ENCODE measurements at regions of chr1 and their contacts with region 1.

Region 1: GRCh38 chr1:172429331-172430127 is 9.0 kb downstream of the C1orf105 start:
- DNase-seq: peak; percentile 56
- H3K4me3 Mint-ChIP-seq: no peak overlapping the region
- H3K27ac Mint-ChIP-seq: no peak overlapping the region
- H3K4me1 Mint-ChIP-seq: peaks cover 15% of the 10 kb centered on the region
- H3K27me3 Mint-ChIP-seq: no peaks in the 10 kb centered on the region
- CTCF ChIP-seq: peak; percentile 78

Region 2: GRCh38 chr1:171801487-171801891 is 628.0 kb before region 1 on chr1:
- CTCF ChIA-PET with region 1: no interaction called
- intact Hi-C with region 1: loop called (anchors 10 kb)
- DNase-seq: peak; percentile 40
- H3K4me3 Mint-ChIP-seq: no peak overlapping the region
- H3K27ac Mint-ChIP-seq: no peak overlapping the region
- H3K4me1 Mint-ChIP-seq: peaks cover 8% of the 10 kb centered on the region
- H3K27me3 Mint-ChIP-seq: no peaks in the 10 kb centered on the region
- CTCF ChIP-seq: peak; percentile 74

Region 3: GRCh38 chr1:172089768-172090510 is 339.6 kb before region 1 on chr1:
- CTCF ChIA-PET with region 1: no interaction called
- intact Hi-C with region 1: loop called (anchors 1 kb)
- DNase-seq: peak; percentile 83
- H3K4me3 Mint-ChIP-seq: no peak overlapping the region
- H3K27ac Mint-ChIP-seq: no peak overlapping the region
- H3K4me1 Mint-ChIP-seq: peaks cover 11% of the 10 kb centered on the region
- H3K27me3 Mint-ChIP-seq: no peaks in the 10 kb centered on the region
- CTCF ChIP-seq: peak; percentile 86

Region 4: DNA sequence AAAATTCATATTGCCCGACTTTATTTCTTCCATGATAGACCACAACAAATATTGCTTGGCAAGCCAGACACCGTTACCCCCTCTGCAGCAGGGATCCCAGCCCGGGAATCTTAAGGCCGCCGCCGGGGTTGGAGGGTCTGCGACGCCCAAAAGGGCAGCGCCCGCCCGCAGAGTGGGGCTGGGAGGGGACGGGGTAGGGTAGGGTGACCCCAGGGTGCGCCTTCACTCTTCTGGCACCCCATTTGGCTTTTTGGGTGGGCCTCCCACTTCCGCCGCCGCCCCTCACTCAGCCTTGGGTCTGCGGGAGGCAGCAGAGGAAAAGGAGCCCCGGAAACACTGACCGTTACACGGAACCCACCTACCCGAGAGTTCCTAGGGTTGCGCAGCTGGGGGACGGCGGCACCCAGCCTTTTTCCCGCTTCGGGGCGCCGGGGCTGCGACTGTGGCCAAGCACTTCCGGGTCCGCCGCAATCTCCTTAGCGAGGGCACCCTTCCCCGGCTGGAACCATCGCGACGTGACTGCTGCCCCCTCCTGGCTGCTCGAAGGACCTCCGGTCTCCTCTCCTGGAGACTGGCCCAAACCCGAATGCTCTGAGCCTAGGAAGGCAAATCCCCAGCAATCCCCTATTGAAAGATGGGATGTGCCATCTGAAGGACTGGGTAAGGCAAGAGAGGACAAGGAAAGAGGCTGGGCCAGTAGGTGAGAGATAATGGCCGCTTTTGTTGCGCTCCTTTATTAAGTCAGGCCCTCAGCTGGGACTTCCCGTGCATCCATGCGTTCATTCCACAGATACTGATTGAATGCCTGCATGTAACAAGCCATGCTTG is 14.3 kb after region 1 on chr1 and contains the start of gene PIGC:
- CTCF ChIA-PET with region 1: interaction called, 8 read pairs
- intact Hi-C with region 1: loop called (anchors 2 kb)
- DNase-seq: peak; percentile 97
- H3K4me3 Mint-ChIP-seq: peak within 1 kb of the TSS; percentile 87
- H3K27ac Mint-ChIP-seq: peak within 1 kb of the TSS; percentile 79
- H3K4me1 Mint-ChIP-seq: peaks cover 40% of the 10 kb centered on the region
- H3K27me3 Mint-ChIP-seq: no peaks in the 10 kb centered on the region
- CTCF ChIP-seq: peak; percentile 90
- total RNA-seq, gene PIGC: 29.2 TPM in 2 replicates

Region 5: DNA sequence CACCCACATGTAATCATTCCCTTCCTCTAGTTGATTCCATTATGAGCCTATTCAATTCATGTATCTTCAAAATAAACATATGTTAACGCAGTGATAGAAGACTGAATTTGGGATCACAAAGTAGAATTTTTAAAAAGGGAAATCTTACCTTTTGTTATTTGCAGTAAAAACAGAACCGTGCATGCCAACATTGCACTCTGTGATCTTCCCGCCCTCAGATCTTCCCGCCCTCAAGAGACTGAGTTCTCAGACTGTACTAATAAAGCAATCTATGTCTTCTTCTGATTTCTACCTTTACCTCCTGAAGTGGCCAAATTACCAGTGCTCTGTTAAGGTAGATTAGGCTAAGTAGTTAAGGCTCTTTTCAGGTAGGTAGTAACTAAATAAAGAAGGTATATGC is 99.8 kb after region 1 on chr1:
- CTCF ChIA-PET with region 1: no interaction called
- intact Hi-C with region 1: no loop called
- DNase-seq: no peak
- H3K4me3 Mint-ChIP-seq: no peak overlapping the region
- H3K27ac Mint-ChIP-seq: no peak overlapping the region
- H3K4me1 Mint-ChIP-seq: peaks cover 11% of the 10 kb centered on the region
- H3K27me3 Mint-ChIP-seq: no peaks in the 10 kb centered on the region
- CTCF ChIP-seq: no peak

Region 6: DNA sequence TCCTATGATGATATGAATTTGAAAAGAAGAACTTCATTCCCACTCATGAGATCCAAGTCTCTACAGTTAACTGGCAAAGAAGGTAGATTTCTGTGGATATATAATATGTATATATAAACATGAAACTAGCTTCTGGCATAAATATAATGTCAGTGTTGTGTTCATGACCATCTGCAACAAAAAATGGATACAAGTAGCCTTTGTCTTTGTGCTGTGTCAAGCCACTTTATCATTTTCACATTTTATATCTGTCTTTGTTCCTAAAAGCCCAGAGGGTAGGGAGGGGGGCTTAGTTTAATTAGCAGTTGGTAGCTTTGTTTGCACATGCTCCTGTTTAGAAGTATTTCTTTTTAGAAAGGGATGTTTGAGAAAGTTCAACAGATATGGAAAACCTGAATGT is 173.2 kb after region 1 on chr1:
- CTCF ChIA-PET with region 1: no interaction called
- intact Hi-C with region 1: no loop called
- DNase-seq: no peak
- H3K4me3 Mint-ChIP-seq: no peak overlapping the region
- H3K27ac Mint-ChIP-seq: no peak overlapping the region
- H3K4me1 Mint-ChIP-seq: peaks cover 21% of the 10 kb centered on the region
- H3K27me3 Mint-ChIP-seq: no peaks in the 10 kb centered on the region
- CTCF ChIP-seq: no peak

Region 7: DNA sequence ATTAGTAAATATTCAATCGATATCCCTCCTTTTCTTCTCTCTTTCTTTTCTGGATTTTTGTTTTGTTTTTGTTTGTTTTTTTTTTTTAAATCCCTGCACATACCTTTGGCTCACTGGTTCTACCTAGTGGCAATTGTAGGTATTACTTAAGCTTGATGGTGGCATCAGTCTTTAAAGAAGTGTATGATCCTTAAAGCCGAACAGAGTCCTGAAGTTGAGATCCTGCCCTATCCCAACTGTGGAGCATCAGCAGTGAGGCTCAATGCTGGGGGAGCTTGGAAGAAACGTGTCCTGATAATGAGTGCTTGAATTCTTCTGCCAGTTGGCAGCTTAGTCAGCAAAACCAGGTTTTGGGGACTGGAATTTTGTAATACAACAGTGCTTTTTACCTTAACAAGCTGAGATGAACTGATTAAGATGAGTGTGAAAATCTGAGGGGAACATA is 290.2 kb after region 1 on chr1:
- CTCF ChIA-PET with region 1: interaction called, 3 read pairs
- intact Hi-C with region 1: loop called (anchors 1 kb)
- DNase-seq: peak; percentile 35
- H3K4me3 Mint-ChIP-seq: no peak overlapping the region
- H3K27ac Mint-ChIP-seq: no peak overlapping the region
- H3K4me1 Mint-ChIP-seq: peaks cover 46% of the 10 kb centered on the region
- H3K27me3 Mint-ChIP-seq: no peaks in the 10 kb centered on the region
- CTCF ChIP-seq: peak; percentile 86

Region 8: DNA sequence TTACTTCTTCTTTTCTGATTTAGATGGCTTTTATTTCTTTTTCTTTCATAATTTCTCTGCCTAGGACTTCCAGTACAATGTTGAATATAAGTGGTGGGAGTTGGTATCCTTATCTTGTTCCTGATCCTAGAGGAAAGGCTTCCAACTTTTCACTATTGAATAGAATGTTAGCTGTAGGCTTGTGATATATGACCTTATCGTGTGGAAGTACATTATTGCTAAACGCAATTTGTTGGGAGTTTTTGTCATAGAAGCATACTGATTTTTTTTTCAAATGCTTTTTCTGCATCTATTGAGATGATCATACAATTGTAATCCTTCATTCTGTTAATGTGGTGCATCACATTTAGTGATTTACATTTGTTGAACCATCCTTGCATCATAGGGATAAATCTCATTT is 308.9 kb after region 1 on chr1:
- CTCF ChIA-PET with region 1: no interaction called
- intact Hi-C with region 1: loop called (anchors 5 kb)
- DNase-seq: no peak
- H3K4me3 Mint-ChIP-seq: no peak overlapping the region
- H3K27ac Mint-ChIP-seq: no peak overlapping the region
- H3K4me1 Mint-ChIP-seq: peaks cover 8% of the 10 kb centered on the region
- H3K27me3 Mint-ChIP-seq: no peaks in the 10 kb centered on the region
- CTCF ChIP-seq: no peak